ENCODE measurements at regions of chr7 and their contacts with region 1.

Region 1: GRCh38 chr7:158353606-158354570 is 233.7 kb downstream of the PTPRN2 start:
- DNase-seq: peak in 1 of 2 experiments; percentile 81
- H3K4me3 ChIP-seq: no peak overlapping the region
- H3K27ac ChIP-seq: no peak overlapping the region
- H3K4me1 ChIP-seq: peaks cover 0 to 10% (median 4%) of the 10 kb centered on the region in 4 experiments; a peak in 4 of 7 replicates
- H3K27me3 ChIP-seq: peaks cover 0 to 20% (median 11%) of the 10 kb centered on the region in 4 experiments; a peak in 4 of 7 replicates
- CTCF ChIP-seq: peak; percentile 43 to 88 (median 83)
- EP300 ChIP-seq: no peak
- POLR2A ChIP-seq: no peak
- RAD21 ChIP-seq: peak; percentile 93 to 95

Region 2: GRCh38 chr7:158050978-158051651 is 302.8 kb before region 1 on chr7:
- CTCF ChIA-PET with region 1: interaction called, 11 read pairs
- POLR2A ChIA-PET with region 1: no interaction called
- DNase-seq: no peak
- H3K4me3 ChIP-seq: no peak overlapping the region
- H3K27ac ChIP-seq: no peak overlapping the region
- H3K4me1 ChIP-seq: no peaks in the 10 kb centered on the region; a peak in 1 of 7 replicates
- H3K27me3 ChIP-seq: no peaks in the 10 kb centered on the region
- CTCF ChIP-seq: no peak
- EP300 ChIP-seq: no peak
- POLR2A ChIP-seq: no peak
- RAD21 ChIP-seq: no peak

Region 3: DNA sequence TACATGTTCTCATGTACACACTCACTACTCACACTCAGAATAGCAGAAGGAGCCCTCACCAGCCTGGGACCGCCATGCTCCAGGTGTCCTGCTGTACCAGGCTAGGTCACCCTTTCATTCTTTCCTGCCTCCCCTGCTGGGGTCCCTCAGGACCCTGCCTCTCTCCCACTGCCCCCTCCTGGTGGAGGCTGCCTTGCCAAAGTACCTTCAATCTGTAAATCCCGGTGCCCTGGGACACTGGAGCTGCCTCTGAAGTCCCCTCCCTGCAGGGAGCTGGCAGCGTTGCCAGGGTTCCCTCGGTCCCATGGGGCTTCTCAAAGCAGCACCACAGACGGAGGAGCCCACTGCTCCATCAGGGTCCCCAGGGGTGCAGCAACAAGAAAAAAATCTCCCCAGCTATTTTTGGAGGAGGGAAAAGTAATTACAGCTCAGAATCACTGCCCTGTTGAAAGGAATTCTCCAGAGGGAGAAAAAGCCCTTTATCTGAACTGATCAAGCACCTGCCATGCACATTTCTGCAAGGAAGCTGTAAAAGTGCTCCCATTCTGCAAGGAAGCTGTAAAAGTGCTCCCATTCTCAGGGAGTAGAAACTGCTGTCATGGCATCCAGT is 26.2 kb before region 1 on chr7:
- CTCF ChIA-PET with region 1: interaction called, 12 read pairs
- POLR2A ChIA-PET with region 1: no interaction called
- DNase-seq: peak in 1 of 2 experiments; percentile 45
- H3K4me3 ChIP-seq: no peak overlapping the region
- H3K27ac ChIP-seq: no peak overlapping the region
- H3K4me1 ChIP-seq: peaks cover 0 to 9% (median 3%) of the 10 kb centered on the region in 4 experiments; a peak in 4 of 7 replicates
- H3K27me3 ChIP-seq: peaks cover 0 to 2% (median 0%) of the 10 kb centered on the region in 4 experiments; a peak in 1 of 7 replicates
- CTCF ChIP-seq: peak in 2 of 3 experiments; percentile 18 to 19; a peak in 2 of 4 replicates
- EP300 ChIP-seq: no peak
- POLR2A ChIP-seq: no peak
- RAD21 ChIP-seq: no peak; a peak in 1 of 4 replicates

Region 4: DNA sequence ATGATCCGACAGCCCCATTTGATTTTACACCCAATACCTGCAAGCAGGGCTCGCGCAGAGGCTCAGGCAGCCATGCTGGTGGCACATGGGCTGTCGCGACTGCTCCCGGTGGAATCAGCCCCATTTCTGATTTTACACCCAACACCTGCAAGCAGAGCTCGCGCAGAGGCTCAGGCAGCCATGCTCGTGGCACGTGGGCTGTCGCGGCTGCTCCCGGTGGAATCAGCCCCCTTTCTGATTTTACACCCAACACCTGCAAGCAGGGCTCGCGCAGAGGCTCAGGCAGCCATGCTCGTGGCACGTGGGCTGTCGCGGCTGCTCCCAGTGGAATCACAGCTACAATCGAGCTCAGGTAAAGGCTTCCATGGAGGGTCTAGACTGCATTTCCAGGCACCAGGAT is 10.4 kb before region 1 on chr7:
- CTCF ChIA-PET with region 1: interaction called, 26 read pairs
- POLR2A ChIA-PET with region 1: no interaction called
- DNase-seq: no peak
- H3K4me3 ChIP-seq: no peak overlapping the region
- H3K27ac ChIP-seq: no peak overlapping the region
- H3K4me1 ChIP-seq: no peaks in the 10 kb centered on the region
- H3K27me3 ChIP-seq: no peaks in the 10 kb centered on the region
- CTCF ChIP-seq: no peak
- EP300 ChIP-seq: no peak
- POLR2A ChIP-seq: no peak
- RAD21 ChIP-seq: no peak

Region 5: GRCh38 chr7:158366346-158366745 is 12.5 kb after region 1 on chr7:
- CTCF ChIA-PET with region 1: interaction called, 18 read pairs
- POLR2A ChIA-PET with region 1: no interaction called
- DNase-seq: no peak
- H3K4me3 ChIP-seq: no peak overlapping the region
- H3K27ac ChIP-seq: no peak overlapping the region
- H3K4me1 ChIP-seq: no peaks in the 10 kb centered on the region
- H3K27me3 ChIP-seq: no peaks in the 10 kb centered on the region
- CTCF ChIP-seq: no peak
- EP300 ChIP-seq: no peak
- POLR2A ChIP-seq: no peak
- RAD21 ChIP-seq: no peak

Region 6: DNA sequence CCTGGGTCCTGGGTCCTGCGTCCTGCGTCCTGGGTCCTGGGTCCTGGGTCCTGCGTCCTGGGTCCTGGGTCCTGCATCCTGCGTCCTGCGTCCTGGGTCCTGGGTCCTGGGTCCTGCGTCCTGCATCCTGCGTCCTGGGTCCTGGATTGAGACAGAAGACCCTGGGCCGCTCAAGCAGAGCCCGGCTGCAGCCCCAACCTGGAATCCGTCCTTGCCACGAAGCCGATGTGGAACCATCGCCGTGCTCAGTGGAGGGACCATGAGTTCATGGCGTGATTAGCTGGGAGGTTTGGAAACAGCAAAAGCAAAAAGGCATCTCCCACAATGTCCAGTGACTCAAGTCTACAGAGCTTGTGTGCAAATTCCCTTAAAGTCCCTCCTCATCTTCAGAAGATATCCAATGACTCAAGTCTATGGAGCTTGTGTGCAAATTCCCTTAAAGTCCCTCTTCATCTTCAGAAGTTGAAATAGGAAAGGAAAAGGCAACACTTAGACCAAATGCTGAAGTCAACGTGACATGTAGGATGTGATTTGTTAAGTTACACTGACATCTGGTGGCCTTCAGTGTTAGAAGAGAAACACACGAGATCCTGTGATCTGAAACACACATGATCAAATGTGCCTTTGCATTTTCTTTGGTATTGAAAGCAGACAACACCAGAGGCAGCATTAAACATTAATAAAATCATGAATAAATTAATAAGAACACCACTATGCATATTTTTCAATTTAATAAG is 53.9 kb after region 1 on chr7:
- CTCF ChIA-PET with region 1: interaction called, 50 read pairs
- POLR2A ChIA-PET with region 1: no interaction called
- DNase-seq: no peak
- H3K4me3 ChIP-seq: no peak overlapping the region
- H3K27ac ChIP-seq: no peak overlapping the region
- H3K4me1 ChIP-seq: no peaks in the 10 kb centered on the region; a peak in 1 of 7 replicates
- H3K27me3 ChIP-seq: no peaks in the 10 kb centered on the region
- CTCF ChIP-seq: peak in 2 of 3 experiments; percentile 61 to 66; a peak in 3 of 4 replicates
- EP300 ChIP-seq: no peak
- POLR2A ChIP-seq: no peak
- RAD21 ChIP-seq: peak; percentile 80 to 84

Region 7: GRCh38 chr7:158494162-158494586 is 140.3 kb after region 1 on chr7:
- CTCF ChIA-PET with region 1: no interaction called
- POLR2A ChIA-PET with region 1: no interaction called
- DNase-seq: no peak
- H3K4me3 ChIP-seq: no peak overlapping the region
- H3K27ac ChIP-seq: no peak overlapping the region
- H3K4me1 ChIP-seq: peaks cover 6 to 23% (median 16%) of the 10 kb centered on the region in 4 experiments
- H3K27me3 ChIP-seq: no peaks in the 10 kb centered on the region
- CTCF ChIP-seq: peak; percentile 15 to 52 (median 36); a peak in 3 of 4 replicates
- EP300 ChIP-seq: no peak
- POLR2A ChIP-seq: no peak
- RAD21 ChIP-seq: peak; percentile 38 to 62; a peak in 3 of 4 replicates

Measured in H1 (cell line).